Esophagus squamous epithelium (tissue), 5 donors: ENCODE measurements at regions of chr17 and their contacts with region 1.

Region 1: DNA sequence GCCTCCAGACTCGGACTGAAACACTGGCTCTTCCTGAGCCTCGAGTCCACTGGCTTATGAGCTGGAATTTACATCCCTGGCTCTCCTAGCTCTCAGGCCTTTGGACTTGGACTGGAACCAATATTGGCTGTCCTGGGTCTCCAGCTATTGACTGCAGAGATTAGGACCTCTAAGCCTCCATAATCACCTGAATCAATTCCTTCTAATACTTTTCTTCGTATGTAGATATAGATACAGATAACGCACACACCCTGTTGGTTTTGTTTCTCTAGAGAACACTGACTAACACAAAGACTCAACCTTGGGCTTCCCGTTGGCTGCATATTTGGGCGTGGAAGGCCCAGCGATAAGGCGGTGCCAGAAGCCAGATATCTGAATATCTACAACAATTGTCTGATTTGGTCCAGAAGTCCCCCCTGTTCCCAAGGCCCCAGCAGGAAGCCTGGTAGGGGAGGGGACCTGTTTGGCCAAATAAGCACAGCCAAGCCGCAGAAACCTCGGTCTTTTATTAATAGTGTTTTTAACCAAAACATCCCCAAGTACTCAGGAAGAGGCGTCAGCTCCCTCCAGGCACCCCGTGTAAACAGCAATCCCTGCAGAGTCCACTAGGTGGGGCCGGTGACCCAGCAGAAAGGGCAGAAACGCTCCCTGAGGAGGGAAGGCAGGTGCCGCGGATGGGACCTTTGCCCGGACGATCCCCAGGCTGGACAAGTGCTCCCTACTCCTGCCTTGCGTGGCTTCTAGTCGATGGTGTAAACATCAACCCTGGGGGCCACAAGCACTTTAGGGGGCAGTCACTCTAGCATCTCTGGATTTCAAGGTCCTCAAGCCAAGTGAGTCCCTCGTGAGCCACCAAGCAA is 57.0 kb downstream of the ABR start:
- DNase-seq: no peak
- H3K4me3 ChIP-seq: no peak overlapping the region
- H3K27ac ChIP-seq: peak overlapping the region; percentile 5 to 68 (median 48)
- H3K4me1 ChIP-seq: peaks cover 3 to 21% (median 11%) of the 10 kb centered on the region in 3 donors
- H3K27me3 ChIP-seq: peaks cover 0 to 5% (median 0%) of the 10 kb centered on the region in 4 donors
- CTCF ChIP-seq: peak; percentile 78 to 95 (median 93)
- POLR2A ChIP-seq: no peak

Region 2: GRCh38 chr17:1031711-1032110 is 91.1 kb before region 1 on chr17:
- intact Hi-C with region 1: no loop called
- DNase-seq: no peak
- H3K4me3 ChIP-seq: peak overlapping the region; percentile 14 to 57 (median 34)
- H3K27ac ChIP-seq: peak overlapping the region in 3 of 4 donors; percentile 34 to 70 (median 67)
- H3K4me1 ChIP-seq: peaks cover 21 to 56% (median 25%) of the 10 kb centered on the region in 3 donors
- H3K27me3 ChIP-seq: no peaks in the 10 kb centered on the region
- CTCF ChIP-seq: no peak
- POLR2A ChIP-seq: no peak

Region 3: GRCh38 chr17:1179818-1180742 is 57.3 kb after region 1 on chr17 and contains the start of gene ABR:
- intact Hi-C with region 1: loop called (anchors 5 kb)
- DNase-seq: no peak
- H3K4me3 ChIP-seq: peak within 1 kb of the TSS; percentile 55 to 96 (median 78)
- H3K27ac ChIP-seq: peak within 1 kb of the TSS; percentile 60 to 84 (median 77)
- H3K4me1 ChIP-seq: peaks cover 29 to 74% (median 34%) of the 10 kb centered on the region in 3 donors
- H3K27me3 ChIP-seq: peaks cover 0 to 43% (median 0%) of the 10 kb centered on the region in 4 donors
- CTCF ChIP-seq: no peak
- POLR2A ChIP-seq: peak in 2 of 4 donors; percentile 33 to 48
- total RNA-seq, gene ABR: 62.1 to 248 (median 75.5) TPM

Region 4: GRCh38 chr17:1190751-1191331 is 68.1 kb after region 1 on chr17:
- intact Hi-C with region 1: loop called (anchors 5 kb)
- DNase-seq: no peak
- H3K4me3 ChIP-seq: no peak overlapping the region
- H3K27ac ChIP-seq: no peak overlapping the region
- H3K4me1 ChIP-seq: peaks cover 12 to 53% (median 43%) of the 10 kb centered on the region in 3 donors
- H3K27me3 ChIP-seq: peaks cover 0 to 46% (median 0%) of the 10 kb centered on the region in 4 donors
- CTCF ChIP-seq: no peak
- POLR2A ChIP-seq: no peak